ENCODE measurements at regions of chr1 and their contacts with region 1.

Region 1: GRCh38 chr1:180168786-180169639 is 14.3 kb downstream of the QSOX1 start:
- DNase-seq: no peak
- H3K4me3 ChIP-seq: no peak overlapping the region
- CTCF ChIP-seq: peak; percentile 74

Region 2: DNA sequence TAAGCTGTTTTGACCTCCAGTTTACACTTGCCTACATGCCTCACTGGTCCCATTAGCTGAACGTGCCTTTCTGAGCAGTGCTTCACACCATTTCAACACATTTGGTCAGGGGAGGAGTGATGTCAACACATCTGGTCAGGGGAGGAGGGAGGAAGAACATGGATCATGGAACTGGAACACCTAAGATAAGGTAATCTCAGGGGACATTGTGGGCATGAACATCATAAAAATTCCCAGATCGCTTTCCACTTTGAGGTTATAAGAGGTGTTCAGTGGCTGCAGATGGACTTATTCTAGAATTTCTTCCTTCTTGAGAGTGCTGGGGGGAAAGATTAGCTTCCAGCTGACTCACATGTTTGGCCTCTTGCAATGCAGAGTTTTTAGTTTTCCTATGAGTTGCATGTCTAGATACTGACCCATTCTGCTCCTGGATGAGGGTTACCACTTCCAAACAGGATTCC is 12.4 kb before region 1 on chr1:
- CTCF ChIA-PET with region 1: interaction called, 34 read pairs
- POLR2A ChIA-PET with region 1: interaction called, 4 read pairs
- DNase-seq: no peak
- H3K4me3 ChIP-seq: peak overlapping the region; percentile 89
- CTCF ChIP-seq: no peak